Activated B cell treated with CpG ODN at 0.5 μM for 24 hours (primary cell): ENCODE measurements at regions of chr19 and their contacts with region 1.

Region 1: DNA sequence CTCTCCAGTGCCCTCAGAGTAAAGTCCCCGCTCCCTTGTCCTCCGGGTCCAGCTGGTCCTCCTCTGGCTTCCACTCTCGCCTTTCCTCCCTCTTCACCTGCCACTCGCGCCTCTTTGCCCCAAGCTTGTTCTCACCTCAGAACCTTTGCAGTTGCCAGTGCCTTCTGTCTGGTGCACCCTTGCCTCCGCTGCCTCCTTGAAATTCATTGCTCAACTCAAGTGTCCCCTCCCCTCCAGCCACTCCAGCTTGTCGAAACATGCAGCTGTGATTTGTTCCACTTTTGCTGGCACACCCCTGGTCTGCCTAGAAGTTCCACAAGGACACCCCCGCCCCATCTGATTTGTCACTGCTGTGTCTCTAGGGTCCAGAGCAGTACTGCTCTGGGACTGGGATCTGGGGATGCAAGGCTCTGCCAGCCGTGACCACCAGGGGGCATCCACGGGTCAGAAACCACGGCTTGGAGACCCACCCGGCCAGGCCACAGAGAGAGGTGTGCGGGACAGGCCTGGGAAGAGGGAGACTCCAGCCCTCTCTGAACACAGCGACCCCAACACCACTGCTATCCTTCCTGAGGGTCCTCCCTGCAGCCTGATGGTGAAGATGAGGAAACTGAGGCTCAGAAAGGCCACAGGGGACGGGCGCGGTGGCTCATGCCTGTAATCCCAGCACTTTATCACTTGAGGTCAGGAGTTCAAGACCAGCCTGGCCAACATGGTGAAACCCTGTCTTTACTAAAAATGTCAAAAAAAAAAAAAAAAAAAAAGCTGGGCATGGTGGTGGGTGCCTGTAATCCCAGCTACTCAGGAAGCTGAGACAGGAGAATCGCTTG is 49.9 kb downstream of the AP1M1 start:
- DNase-seq: peak; percentile 85
- ATAC-seq: peak; percentile 88
- H3K4me3 Mint-ChIP-seq: peak overlapping the region; percentile 17
- H3K27ac Mint-ChIP-seq: peak overlapping the region; percentile 32
- H3K4me1 Mint-ChIP-seq: peaks cover 41% of the 10 kb centered on the region
- H3K27me3 Mint-ChIP-seq: no peaks in the 10 kb centered on the region
- CTCF ChIP-seq: peak; percentile 33

Region 2: GRCh38 chr19:15629003-15629880 is 618.3 kb before region 1 on chr19:
- CTCF ChIA-PET with region 1: no interaction called
- POLR2A ChIA-PET with region 1: no interaction called
- intact Hi-C with region 1: loop called (anchors 2 kb)
- DNase-seq: peak; percentile 78
- ATAC-seq: peak; percentile 98
- H3K4me3 Mint-ChIP-seq: no peak overlapping the region
- H3K27ac Mint-ChIP-seq: no peak overlapping the region
- H3K4me1 Mint-ChIP-seq: peaks cover 11% of the 10 kb centered on the region
- H3K27me3 Mint-ChIP-seq: peaks cover 9% of the 10 kb centered on the region
- CTCF ChIP-seq: no peak

Region 3: DNA sequence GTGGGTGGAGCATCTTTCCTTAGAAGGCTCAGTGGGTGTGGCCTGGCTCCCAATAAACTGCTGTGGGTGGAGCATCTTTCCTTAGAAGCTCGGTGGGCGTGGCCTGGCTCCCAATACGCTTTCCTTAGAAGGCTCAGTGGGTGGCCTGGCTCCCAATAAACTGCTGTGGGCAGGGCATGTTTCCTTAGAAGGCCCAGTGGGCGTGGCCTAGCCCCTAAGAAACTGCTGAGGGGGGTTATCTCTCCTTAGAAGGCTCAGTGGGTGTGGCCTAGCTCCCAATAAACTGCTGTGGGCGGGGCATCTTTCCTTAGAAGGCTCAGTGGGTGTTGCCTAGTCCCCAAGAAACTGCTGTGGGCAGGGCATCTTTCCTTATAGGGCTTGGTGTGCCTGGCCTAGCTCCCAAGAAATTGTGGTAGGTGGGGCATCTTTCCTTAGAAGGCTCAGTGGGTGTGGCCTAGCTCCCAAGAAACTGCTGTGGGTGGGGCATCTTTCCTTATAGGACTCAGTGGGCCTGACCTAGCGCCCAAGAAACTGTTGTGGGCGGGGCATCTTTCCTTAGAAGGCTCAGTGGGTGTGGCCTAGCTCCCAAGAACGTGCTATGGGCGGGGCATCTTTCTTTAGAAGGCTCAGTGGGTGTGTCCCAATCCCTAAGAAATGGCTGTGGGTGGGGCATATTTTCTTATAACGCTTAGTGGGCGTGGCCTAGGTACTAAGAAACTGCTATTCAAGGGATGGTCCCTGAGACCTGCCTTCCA is 93.8 kb before region 1 on chr19:
- CTCF ChIA-PET with region 1: no interaction called
- POLR2A ChIA-PET with region 1: no interaction called
- intact Hi-C with region 1: no loop called
- DNase-seq: no peak
- ATAC-seq: no peak
- H3K4me3 Mint-ChIP-seq: no peak overlapping the region
- H3K27ac Mint-ChIP-seq: peak overlapping the region; percentile 30
- H3K4me1 Mint-ChIP-seq: peaks cover 59% of the 10 kb centered on the region
- H3K27me3 Mint-ChIP-seq: no peaks in the 10 kb centered on the region
- CTCF ChIP-seq: no peak

Region 4: GRCh38 chr19:16315825-16316505 is 68.4 kb after region 1 on chr19:
- CTCF ChIA-PET with region 1: interaction called, 5 read pairs
- POLR2A ChIA-PET with region 1: interaction called, 12 read pairs
- intact Hi-C with region 1: no loop called
- DNase-seq: no peak
- ATAC-seq: no peak
- H3K4me3 Mint-ChIP-seq: no peak overlapping the region
- H3K27ac Mint-ChIP-seq: peak overlapping the region; percentile 16
- H3K4me1 Mint-ChIP-seq: peaks cover 27% of the 10 kb centered on the region
- H3K27me3 Mint-ChIP-seq: no peaks in the 10 kb centered on the region
- CTCF ChIP-seq: no peak

Region 5: GRCh38 chr19:16338470-16339360 is 91.1 kb after region 1 on chr19:
- CTCF ChIA-PET with region 1: interaction called, 6 read pairs
- POLR2A ChIA-PET with region 1: interaction called, 15 read pairs
- intact Hi-C with region 1: no loop called
- DNase-seq: no peak
- ATAC-seq: peak; percentile 19
- H3K4me3 Mint-ChIP-seq: peak overlapping the region; percentile 76
- H3K27ac Mint-ChIP-seq: peak overlapping the region; percentile 75
- H3K4me1 Mint-ChIP-seq: peaks cover 64% of the 10 kb centered on the region
- H3K27me3 Mint-ChIP-seq: no peaks in the 10 kb centered on the region
- CTCF ChIP-seq: no peak

Region 6: GRCh38 chr19:16397791-16398471 is 150.4 kb after region 1 on chr19:
- CTCF ChIA-PET with region 1: interaction called, 3 read pairs
- POLR2A ChIA-PET with region 1: interaction called, 11 read pairs
- intact Hi-C with region 1: no loop called
- DNase-seq: no peak
- ATAC-seq: no peak
- H3K4me3 Mint-ChIP-seq: peak overlapping the region; percentile 59
- H3K27ac Mint-ChIP-seq: peak overlapping the region; percentile 91
- H3K4me1 Mint-ChIP-seq: peaks cover 77% of the 10 kb centered on the region
- H3K27me3 Mint-ChIP-seq: no peaks in the 10 kb centered on the region
- CTCF ChIP-seq: no peak